MCF 10A (cell line): ENCODE measurements at regions of chr1 and their contacts with region 1.

Region 1: GRCh38 chr1:196148367-196148970 is 459.8 kb downstream of the KCNT2 start:
- DNase-seq: peak; percentile 69
- H3K4me3 Mint-ChIP-seq: no peak overlapping the region
- H3K27ac Mint-ChIP-seq: no peak overlapping the region
- H3K4me1 Mint-ChIP-seq: no peaks in the 10 kb centered on the region
- H3K27me3 Mint-ChIP-seq: no peaks in the 10 kb centered on the region
- CTCF ChIP-seq: peak; percentile 68

Region 2: DNA sequence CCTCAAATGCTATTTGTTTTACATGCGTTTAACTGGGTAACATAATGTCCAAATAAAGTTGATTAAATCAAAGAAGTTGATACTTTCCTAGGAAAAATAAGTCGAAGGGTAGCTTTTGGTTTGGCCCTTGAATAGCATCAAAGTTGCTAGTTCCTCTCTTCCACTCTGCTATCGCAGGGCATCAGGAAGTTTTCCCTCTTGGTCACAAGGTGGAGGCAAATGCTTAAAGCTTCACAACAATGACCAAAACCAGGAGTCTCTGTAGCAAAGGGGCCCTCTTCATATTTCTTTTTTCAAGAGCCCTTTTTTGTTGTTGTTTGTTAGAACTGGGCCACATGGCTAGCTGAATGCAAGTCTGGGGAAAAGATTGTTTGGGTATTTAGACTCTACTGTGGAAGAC is 208.6 kb before region 1 on chr1:
- CTCF ChIA-PET with region 1: interaction called, 54 read pairs
- POLR2A ChIA-PET with region 1: no interaction called
- intact Hi-C with region 1: loop called (anchors 1 kb)
- DNase-seq: peak; percentile 51
- H3K4me3 Mint-ChIP-seq: no peak overlapping the region
- H3K27ac Mint-ChIP-seq: no peak overlapping the region
- H3K4me1 Mint-ChIP-seq: no peaks in the 10 kb centered on the region
- H3K27me3 Mint-ChIP-seq: no peaks in the 10 kb centered on the region
- CTCF ChIP-seq: peak; percentile 39

Region 3: GRCh38 chr1:196180847-196181593 is 32.6 kb after region 1 on chr1:
- CTCF ChIA-PET with region 1: interaction called, 15 read pairs
- POLR2A ChIA-PET with region 1: no interaction called
- intact Hi-C with region 1: no loop called
- DNase-seq: peak; percentile 98
- H3K4me3 Mint-ChIP-seq: no peak overlapping the region
- H3K27ac Mint-ChIP-seq: peak overlapping the region; percentile 68
- H3K4me1 Mint-ChIP-seq: peaks cover 21% of the 10 kb centered on the region
- H3K27me3 Mint-ChIP-seq: no peaks in the 10 kb centered on the region
- CTCF ChIP-seq: no peak

Region 4: GRCh38 chr1:196309386-196309785 is 160.9 kb after region 1 on chr1:
- CTCF ChIA-PET with region 1: interaction called, 173 read pairs
- POLR2A ChIA-PET with region 1: interaction called, 10 read pairs
- intact Hi-C with region 1: loop called (anchors 1 kb)
- DNase-seq: peak; percentile 62
- H3K4me3 Mint-ChIP-seq: no peak overlapping the region
- H3K27ac Mint-ChIP-seq: no peak overlapping the region
- H3K4me1 Mint-ChIP-seq: no peaks in the 10 kb centered on the region
- H3K27me3 Mint-ChIP-seq: no peaks in the 10 kb centered on the region
- CTCF ChIP-seq: peak; percentile 69

Region 5: GRCh38 chr1:196660852-196661251 is 512.4 kb after region 1 on chr1:
- CTCF ChIA-PET with region 1: interaction called, 14 read pairs
- POLR2A ChIA-PET with region 1: no interaction called
- intact Hi-C with region 1: loop called (anchors 1 kb)
- DNase-seq: peak; percentile 55
- H3K4me3 Mint-ChIP-seq: no peak overlapping the region
- H3K27ac Mint-ChIP-seq: peak overlapping the region; percentile 2
- H3K4me1 Mint-ChIP-seq: peaks cover 23% of the 10 kb centered on the region
- H3K27me3 Mint-ChIP-seq: no peaks in the 10 kb centered on the region
- CTCF ChIP-seq: peak; percentile 74